GM18951 (cell line): ENCODE measurements at regions of chr3 and their contacts with region 1.

Region 1: GRCh38 chr3:40317061-40317855 is 7.8 kb downstream of the EIF1B start:
- POLR2A ChIP-seq: no peak

Region 2: GRCh38 chr3:40191850-40192448 is 125.3 kb before region 1 on chr3:
- in situ Hi-C with region 1: loop called (anchors 5 kb)
- POLR2A ChIP-seq: no peak